HAP-1 (cell line): ENCODE measurements at regions of chr11 and their contacts with region 1.

Region 1: GRCh38 chr11:62542750-62543567 is 3.6 kb downstream of the AHNAK start:
- DNase-seq: peak; percentile 57 to 90
- H3K4me3 ChIP-seq: peak overlapping the region; percentile 87
- H3K4me1 ChIP-seq: peaks cover 27% of the 10 kb centered on the region
- H3K27me3 ChIP-seq: no peaks in the 10 kb centered on the region

Region 2: GRCh38 chr11:62306227-62306626 is 236.7 kb before region 1 on chr11:
- in situ Hi-C with region 1: no loop called
- DNase-seq: no peak
- H3K4me3 ChIP-seq: no peak overlapping the region
- H3K4me1 ChIP-seq: no peaks in the 10 kb centered on the region
- H3K27me3 ChIP-seq: peaks cover 17% of the 10 kb centered on the region

Region 3: DNA sequence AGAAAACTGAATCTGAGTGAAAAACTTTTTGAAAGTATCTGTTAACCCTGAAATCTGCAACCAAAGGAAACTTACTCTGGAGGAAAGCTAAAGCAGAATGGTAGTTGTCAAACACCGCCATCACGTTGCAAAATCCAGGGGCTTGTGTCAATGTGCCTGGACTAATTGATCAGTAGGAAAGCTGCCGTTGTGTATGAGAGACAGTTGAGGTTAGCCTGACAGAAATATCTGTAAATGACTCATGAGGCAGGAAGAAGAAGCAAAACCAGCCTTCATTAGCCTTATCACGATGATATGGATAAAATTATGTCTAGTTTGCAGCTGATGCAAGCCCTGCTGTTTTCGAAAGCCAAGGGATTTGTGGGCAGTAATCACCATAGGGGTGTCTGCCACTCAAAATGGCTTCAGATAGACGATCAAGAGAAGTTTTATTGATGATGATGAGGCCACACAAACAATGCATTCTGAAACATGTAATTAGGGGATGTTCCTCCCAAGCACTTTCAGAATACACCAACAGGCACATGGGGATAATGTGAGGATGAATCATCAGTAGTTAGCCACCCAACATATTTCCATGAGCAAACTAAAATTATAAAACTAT is 115.2 kb before region 1 on chr11:
- in situ Hi-C with region 1: loop called (anchors 10 kb)
- DNase-seq: no peak
- H3K4me3 ChIP-seq: no peak overlapping the region
- H3K4me1 ChIP-seq: no peaks in the 10 kb centered on the region
- H3K27me3 ChIP-seq: no peaks in the 10 kb centered on the region